Mucosa of descending colon (tissue), 3 donors: ENCODE measurements at regions of chr4 and their contacts with region 1.

Region 1: GRCh38 chr4:112636688-112637551 is at the starts of genes LARP7 and ZGRF1:
- DNase-seq: peak; percentile 98 to 99 (median 99)
- ATAC-seq: peak; percentile 98
- H3K4me3 ChIP-seq: peak within 1 kb of the TSS; percentile 22
- H3K4me1 ChIP-seq: peaks cover 9% of the 10 kb centered on the region
- CTCF ChIP-seq: peak; percentile 91
- total RNA-seq, gene LARP7: 37.7 to 46.5 (median 38.5) TPM
- total RNA-seq, gene ZGRF1: 2.6 to 6.8 (median 3.7) TPM

Region 2: DNA sequence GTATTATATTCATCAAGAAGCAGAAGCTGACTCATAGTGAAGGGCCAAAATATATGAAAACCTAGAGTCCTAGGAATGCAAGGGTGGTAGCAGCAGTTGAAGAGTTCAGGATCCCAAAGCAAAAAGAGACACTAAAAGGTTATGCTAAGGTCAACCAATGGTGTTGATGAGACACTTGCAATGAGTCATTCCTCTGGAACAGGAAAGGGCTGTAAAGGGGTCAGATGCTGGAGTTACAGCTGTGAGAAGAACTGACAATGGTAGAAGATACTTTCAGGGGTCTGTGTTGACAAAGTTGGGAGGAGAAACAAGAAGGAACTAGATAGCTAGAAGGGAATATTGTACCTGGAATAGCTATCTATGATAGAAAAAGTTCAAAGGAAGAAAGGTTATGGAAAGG is 47.7 kb before region 1 on chr4:
- intact Hi-C with region 1: no loop called
- DNase-seq: no peak
- ATAC-seq: no peak
- H3K4me3 ChIP-seq: no peak overlapping the region
- H3K4me1 ChIP-seq: no peaks in the 10 kb centered on the region
- CTCF ChIP-seq: no peak

Region 3: DNA sequence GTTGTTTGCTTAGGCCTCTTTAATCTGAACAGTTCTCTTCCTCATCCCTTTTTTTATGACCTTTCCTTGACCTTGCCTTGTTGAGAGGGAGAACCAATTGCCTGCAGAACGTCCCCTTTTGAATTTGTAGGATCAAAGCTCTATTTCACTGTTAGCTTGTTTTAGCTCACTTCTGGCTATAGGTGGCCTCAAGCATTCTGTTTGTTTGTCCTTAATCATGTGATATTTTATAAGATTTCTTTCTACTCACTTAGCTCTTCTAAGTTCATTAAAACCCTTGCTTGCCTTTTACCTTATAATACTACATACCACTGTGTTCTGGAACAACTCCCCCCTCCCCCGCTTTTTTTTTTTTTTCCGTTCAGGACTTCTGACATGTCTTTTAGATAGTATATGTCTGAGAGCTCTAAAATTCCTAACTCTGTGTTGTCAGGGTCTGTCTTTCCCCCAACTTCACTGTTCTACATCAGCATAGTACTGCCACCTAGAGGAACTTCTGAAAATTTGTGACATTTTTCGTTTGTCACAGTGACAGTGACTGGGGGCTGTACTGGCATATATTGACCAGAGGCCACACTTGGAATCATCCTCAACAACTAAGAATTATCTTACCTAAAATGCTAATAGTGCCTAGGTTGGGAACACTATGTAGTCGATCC is 128.5 kb after region 1 on chr4:
- intact Hi-C with region 1: loop called in 1 of 2 experiments (anchors 10 kb)
- DNase-seq: no peak
- ATAC-seq: no peak
- H3K4me3 ChIP-seq: no peak overlapping the region
- H3K4me1 ChIP-seq: no peaks in the 10 kb centered on the region
- CTCF ChIP-seq: no peak

Region 4: DNA sequence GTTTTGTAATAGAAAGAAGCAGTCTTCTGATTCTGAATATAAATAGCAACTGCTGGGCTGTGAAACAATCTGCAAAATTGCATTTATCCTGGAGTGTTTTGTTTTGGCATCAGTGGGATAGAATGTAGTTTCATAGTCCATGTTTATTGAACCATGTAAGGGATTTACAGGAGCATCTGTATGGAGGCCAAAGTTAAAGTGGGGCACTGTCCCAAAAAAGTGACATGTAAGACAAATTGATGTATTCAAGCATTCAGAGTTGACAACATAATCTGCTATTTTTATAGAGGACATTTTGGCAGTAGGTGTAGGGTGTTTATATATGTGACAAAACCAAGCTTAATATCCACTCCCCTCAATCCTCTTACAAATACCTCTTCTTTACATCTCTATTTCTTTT is 212.0 kb after region 1 on chr4:
- intact Hi-C with region 1: no loop called
- DNase-seq: no peak
- ATAC-seq: no peak
- H3K4me3 ChIP-seq: no peak overlapping the region
- H3K4me1 ChIP-seq: no peaks in the 10 kb centered on the region
- CTCF ChIP-seq: no peak

Region 5: GRCh38 chr4:112938461-112939058 is 301.6 kb after region 1 on chr4:
- intact Hi-C with region 1: loop called in 1 of 2 experiments (anchors 10 kb)
- DNase-seq: no peak
- ATAC-seq: no peak
- H3K4me3 ChIP-seq: no peak overlapping the region
- H3K4me1 ChIP-seq: no peaks in the 10 kb centered on the region
- CTCF ChIP-seq: no peak